Stomach (tissue), 19 donors: ENCODE measurements at regions of chr4 and their contacts with region 1.

Region 1: DNA sequence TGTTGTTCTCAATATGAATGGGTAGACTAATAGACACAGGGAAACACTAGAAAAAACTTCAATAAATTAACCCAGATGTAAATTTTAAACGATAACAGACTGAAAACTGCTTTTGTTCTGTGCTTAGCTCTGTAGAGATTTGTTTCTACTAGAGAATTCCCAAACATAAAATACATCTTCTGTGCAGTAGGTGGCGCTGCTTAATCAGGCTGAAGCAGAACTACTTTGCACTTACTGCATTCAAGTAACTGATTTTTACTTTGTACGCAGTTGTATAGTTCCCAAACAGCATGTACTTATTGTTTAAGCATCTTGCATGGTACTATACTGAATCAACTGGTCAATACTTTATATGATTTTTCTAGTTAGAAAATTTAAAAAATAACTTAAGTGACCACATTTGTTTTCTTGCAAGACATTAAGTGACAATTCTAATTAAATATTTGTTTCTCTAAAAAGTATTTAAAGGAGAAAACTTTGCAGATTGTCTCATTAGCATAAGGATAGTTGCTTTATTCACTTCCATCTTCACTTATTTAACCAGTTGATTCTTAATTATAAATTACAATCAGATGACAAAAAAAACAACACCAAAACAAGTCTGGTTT is 490.6 kb downstream of the IL15 start:
- DNase-seq: peak; percentile 56 to 90
- H3K4me3 ChIP-seq: no peak overlapping the region
- H3K27ac ChIP-seq: no peak overlapping the region
- H3K4me1 ChIP-seq: peaks cover 0 to 44% (median 17%) of the 10 kb centered on the region in 4 donors
- H3K27me3 ChIP-seq: no peaks in the 10 kb centered on the region
- CTCF ChIP-seq: peak in 5 of 7 experiments; percentile 64 to 77 (median 74)
- EP300 ChIP-seq: no peak
- POLR2A ChIP-seq: no peak

Region 2: GRCh38 chr4:142846729-142847596 is 720.0 kb after region 1 on chr4:
- intact Hi-C with region 1: loop called (anchors 5 kb)
- DNase-seq: peak; percentile 58 to 84
- H3K4me3 ChIP-seq: peak overlapping the region; percentile 64 to 78 (median 68)
- H3K27ac ChIP-seq: peak overlapping the region in 4 of 5 donors; percentile 61 to 88 (median 74)
- H3K4me1 ChIP-seq: peaks cover 7 to 36% (median 26%) of the 10 kb centered on the region in 4 donors
- H3K27me3 ChIP-seq: peaks cover 4 to 38% (median 23%) of the 10 kb centered on the region in 3 donors
- CTCF ChIP-seq: peak in 4 of 7 experiments; percentile 26 to 46 (median 30)
- EP300 ChIP-seq: no peak
- POLR2A ChIP-seq: no peak